HCT116 (cell line): ENCODE measurements at regions of chr10 and their contacts with region 1.

Region 1: GRCh38 chr10:13160934-13161856 is at the start of gene MCM10:
- DNase-seq: peak; percentile 99
- ATAC-seq: peak; percentile 99
- H3K4me3 ChIP-seq: peak within 1 kb of the TSS; percentile 92 to 94
- H3K27ac ChIP-seq: peak within 1 kb of the TSS; percentile 30
- H3K4me1 ChIP-seq: peaks cover 0 to 15% of the 10 kb centered on the region in 2 experiments; a peak in 3 of 4 replicates
- H3K27me3 ChIP-seq: no peaks in the 10 kb centered on the region
- CTCF ChIP-seq: peak; percentile 68 to 82 (median 75)
- POLR2A ChIP-seq: peak; percentile 24
- RAD21 ChIP-seq: peak; percentile 77
- total RNA-seq, gene MCM10: 43.1 TPM

Region 2: DNA sequence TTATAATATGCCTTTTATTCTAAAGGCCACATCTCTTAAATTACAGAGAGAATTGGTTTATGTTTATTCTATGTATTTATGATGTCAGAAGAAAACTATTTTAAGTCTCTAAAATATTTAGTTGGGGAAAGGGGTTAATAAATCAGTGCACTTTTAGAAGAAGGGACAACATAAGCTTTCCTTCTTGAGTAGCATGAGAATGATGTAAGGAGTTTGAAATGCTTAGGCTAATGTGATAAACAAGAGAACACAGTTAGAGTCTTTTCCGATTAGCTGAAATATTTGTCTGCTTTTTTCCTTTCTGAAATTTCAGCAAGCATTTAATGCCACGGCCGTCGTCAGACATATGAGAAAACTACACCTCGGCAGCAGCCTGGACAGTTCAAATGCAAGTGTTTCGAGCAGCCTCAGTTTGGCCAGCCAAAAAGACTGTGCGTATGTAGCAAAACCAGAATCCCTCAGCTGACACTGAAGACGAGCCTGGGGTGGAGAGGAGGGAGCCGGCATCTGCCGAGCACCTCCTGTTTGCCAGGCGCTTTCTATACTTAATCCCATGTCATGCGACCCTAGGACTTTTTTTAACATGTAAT is 335.8 kb before region 1 on chr10:
- CTCF ChIA-PET with region 1: no interaction called
- POLR2A ChIA-PET with region 1: no interaction called
- RAD21 ChIA-PET with region 1: no interaction called
- intact Hi-C with region 1: no loop called
- DNase-seq: no peak
- ATAC-seq: no peak
- H3K4me3 ChIP-seq: no peak overlapping the region
- H3K27ac ChIP-seq: no peak overlapping the region
- H3K4me1 ChIP-seq: no peaks in the 10 kb centered on the region
- H3K27me3 ChIP-seq: no peaks in the 10 kb centered on the region
- CTCF ChIP-seq: no peak
- POLR2A ChIP-seq: no peak
- RAD21 ChIP-seq: no peak

Region 3: GRCh38 chr10:13087986-13088618 is 73.1 kb before region 1 on chr10:
- CTCF ChIA-PET with region 1: no interaction called
- POLR2A ChIA-PET with region 1: no interaction called
- RAD21 ChIA-PET with region 1: no interaction called
- intact Hi-C with region 1: no loop called
- DNase-seq: peak; percentile 29
- ATAC-seq: peak; percentile 44
- H3K4me3 ChIP-seq: peak overlapping the region in 1 of 2 experiments; percentile 13; a peak in 2 of 4 replicates
- H3K27ac ChIP-seq: no peak overlapping the region
- H3K4me1 ChIP-seq: peaks cover 9 to 17% of the 10 kb centered on the region in 2 experiments; a peak in 3 of 4 replicates
- H3K27me3 ChIP-seq: no peaks in the 10 kb centered on the region
- CTCF ChIP-seq: no peak
- POLR2A ChIP-seq: no peak
- RAD21 ChIP-seq: no peak

Region 4: GRCh38 chr10:13099666-13100348 is 61.4 kb before region 1 on chr10 and contains the start of gene OPTN:
- CTCF ChIA-PET with region 1: interaction called, 3 read pairs
- POLR2A ChIA-PET with region 1: no interaction called
- RAD21 ChIA-PET with region 1: no interaction called
- intact Hi-C with region 1: loop called (anchors 1 kb)
- DNase-seq: peak; percentile 64
- ATAC-seq: peak; percentile 81
- H3K4me3 ChIP-seq: peak within 1 kb of the TSS; percentile 62 to 75
- H3K27ac ChIP-seq: peak within 1 kb of the TSS; percentile 60
- H3K4me1 ChIP-seq: peaks cover 9 to 28% of the 10 kb centered on the region in 2 experiments; a peak in 3 of 4 replicates
- H3K27me3 ChIP-seq: no peaks in the 10 kb centered on the region
- CTCF ChIP-seq: peak; percentile 56 to 84 (median 71); a peak in 5 of 6 replicates
- POLR2A ChIP-seq: no peak
- RAD21 ChIP-seq: peak; percentile 84
- total RNA-seq, gene OPTN: 17.0 TPM

Region 5: GRCh38 chr10:13183625-13184024 is 22.4 kb after region 1 on chr10:
- CTCF ChIA-PET with region 1: no interaction called
- POLR2A ChIA-PET with region 1: no interaction called
- RAD21 ChIA-PET with region 1: no interaction called
- intact Hi-C with region 1: no loop called
- DNase-seq: no peak
- ATAC-seq: no peak
- H3K4me3 ChIP-seq: no peak overlapping the region
- H3K27ac ChIP-seq: no peak overlapping the region
- H3K4me1 ChIP-seq: no peaks in the 10 kb centered on the region
- H3K27me3 ChIP-seq: no peaks in the 10 kb centered on the region
- CTCF ChIP-seq: no peak
- POLR2A ChIP-seq: no peak
- RAD21 ChIP-seq: no peak

Region 6: GRCh38 chr10:13348216-13349017 is 187.2 kb after region 1 on chr10 and contains the start of gene SEPHS1:
- CTCF ChIA-PET with region 1: no interaction called
- POLR2A ChIA-PET with region 1: no interaction called
- RAD21 ChIA-PET with region 1: no interaction called
- intact Hi-C with region 1: loop called (anchors 5 kb)
- DNase-seq: peak; percentile 52
- ATAC-seq: peak; percentile 81
- H3K4me3 ChIP-seq: peak within 1 kb of the TSS; percentile 84 to 85
- H3K27ac ChIP-seq: peak within 1 kb of the TSS; percentile 90
- H3K4me1 ChIP-seq: peaks cover 15 to 28% of the 10 kb centered on the region in 2 experiments; a peak in 3 of 4 replicates
- H3K27me3 ChIP-seq: no peaks in the 10 kb centered on the region
- CTCF ChIP-seq: 0 out of 6 replicates have a peak, but pooled peaks of 1 of the 3 experiments have one; percentile 7
- POLR2A ChIP-seq: peak; percentile 40
- RAD21 ChIP-seq: no peak
- total RNA-seq, gene SEPHS1: 51.7 TPM